ENCODE measurements at regions of chr10 and their contacts with region 1.

Region 1: GRCh38 chr10:44310762-44311562 is 73.9 kb downstream of the CXCL12 start:
- DNase-seq: peak; percentile 78 to 92 (median 84)
- H3K4me3 ChIP-seq: peak overlapping the region; percentile 20 to 68 (median 53)
- H3K27ac ChIP-seq: peak overlapping the region in 13 of 59 donors; percentile 23 to 69 (median 54)
- H3K27me3 ChIP-seq: no peaks in the 10 kb centered on the region
- CTCF ChIP-seq: peak; percentile 58 to 98 (median 93)

Region 2: GRCh38 chr10:43671656-43672531 is 639.1 kb before region 1 on chr10:
- intact Hi-C with region 1: loop called (anchors 5 kb)
- DNase-seq: peak in 3 of 10 donors; percentile 50 to 61 (median 59)
- H3K4me3 ChIP-seq: no peak overlapping the region
- H3K27ac ChIP-seq: no peak overlapping the region
- H3K27me3 ChIP-seq: peaks cover 0 to 39% (median 18%) of the 10 kb centered on the region in 45 donors
- CTCF ChIP-seq: peak; percentile 64 to 95 (median 85)

Region 3: DNA sequence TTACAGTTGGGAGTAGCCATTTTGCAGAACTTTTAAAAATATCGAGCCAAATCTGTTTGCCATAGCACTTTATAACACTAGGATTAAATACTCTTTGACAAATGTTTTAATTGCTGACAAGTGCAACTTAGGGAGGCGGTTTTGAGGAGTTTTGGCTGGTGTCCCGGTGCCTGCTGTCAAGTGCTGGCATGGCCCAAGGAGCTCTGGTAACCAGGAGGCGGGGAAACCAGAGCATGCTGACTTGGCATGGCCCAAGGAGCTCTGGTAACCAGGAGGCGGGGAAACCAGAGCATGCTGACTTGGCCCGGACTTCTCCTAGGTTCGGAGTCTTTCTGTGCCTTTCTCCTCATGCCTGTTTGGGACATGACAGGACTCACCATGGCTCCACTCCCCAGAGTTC is 631.5 kb before region 1 on chr10:
- intact Hi-C with region 1: loop called (anchors 5 kb)
- DNase-seq: peak in 8 of 10 donors; percentile 44 to 86 (median 66)
- H3K4me3 ChIP-seq: no peak overlapping the region
- H3K27ac ChIP-seq: no peak overlapping the region
- H3K27me3 ChIP-seq: peaks cover 0 to 11% (median 0%) of the 10 kb centered on the region in 45 donors
- CTCF ChIP-seq: no peak

Region 4: DNA sequence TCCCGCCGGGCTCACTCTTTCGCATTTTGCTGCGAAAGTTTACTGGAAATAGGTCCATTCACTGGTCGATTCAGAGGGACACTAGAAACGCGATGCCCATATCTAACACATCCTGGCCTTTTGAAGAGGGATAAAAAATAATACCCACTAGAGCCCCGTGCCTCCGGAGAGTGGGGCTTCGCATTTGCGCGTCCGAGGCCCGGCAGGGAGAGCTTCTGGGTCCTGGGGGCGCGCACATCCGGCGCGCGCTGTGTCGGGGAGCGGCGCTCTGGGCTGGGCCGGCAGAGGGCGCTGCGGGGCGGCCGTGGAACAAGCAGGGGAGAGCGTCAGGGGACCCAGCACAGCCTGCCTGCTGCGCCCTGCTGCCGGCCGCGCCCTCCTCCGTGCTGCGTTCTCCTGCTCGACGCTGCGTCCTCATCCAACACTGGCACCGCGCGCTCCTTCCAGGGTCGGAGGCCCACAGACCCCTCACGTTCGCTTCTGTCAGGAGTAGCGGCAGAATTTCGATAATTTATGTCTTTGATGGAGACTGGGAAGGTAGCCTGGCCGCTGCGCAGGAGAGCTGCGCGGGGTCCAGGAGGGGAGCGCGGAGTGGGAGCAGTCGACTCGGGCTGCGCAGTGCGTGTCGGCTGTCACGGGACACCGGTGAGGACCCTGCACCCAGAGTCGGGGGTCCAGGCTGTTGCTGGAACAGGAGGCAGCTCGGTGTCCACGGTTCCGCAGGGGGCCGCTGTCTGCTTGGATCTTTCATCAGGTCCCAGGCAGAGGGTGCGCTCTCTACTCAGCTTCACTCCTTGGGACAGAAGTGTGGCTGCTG is 620.8 kb before region 1 on chr10:
- intact Hi-C with region 1: loop called (anchors 1 to 5 kb)
- DNase-seq: peak; percentile 63 to 88 (median 78)
- H3K4me3 ChIP-seq: peak overlapping the region; percentile 34 to 88 (median 68)
- H3K27ac ChIP-seq: peak overlapping the region in 37 of 59 donors; percentile 5 to 82 (median 67)
- H3K27me3 ChIP-seq: peaks cover 0 to 9% (median 0%) of the 10 kb centered on the region in 45 donors
- CTCF ChIP-seq: peak; percentile 41 to 98 (median 82)

Region 5: DNA sequence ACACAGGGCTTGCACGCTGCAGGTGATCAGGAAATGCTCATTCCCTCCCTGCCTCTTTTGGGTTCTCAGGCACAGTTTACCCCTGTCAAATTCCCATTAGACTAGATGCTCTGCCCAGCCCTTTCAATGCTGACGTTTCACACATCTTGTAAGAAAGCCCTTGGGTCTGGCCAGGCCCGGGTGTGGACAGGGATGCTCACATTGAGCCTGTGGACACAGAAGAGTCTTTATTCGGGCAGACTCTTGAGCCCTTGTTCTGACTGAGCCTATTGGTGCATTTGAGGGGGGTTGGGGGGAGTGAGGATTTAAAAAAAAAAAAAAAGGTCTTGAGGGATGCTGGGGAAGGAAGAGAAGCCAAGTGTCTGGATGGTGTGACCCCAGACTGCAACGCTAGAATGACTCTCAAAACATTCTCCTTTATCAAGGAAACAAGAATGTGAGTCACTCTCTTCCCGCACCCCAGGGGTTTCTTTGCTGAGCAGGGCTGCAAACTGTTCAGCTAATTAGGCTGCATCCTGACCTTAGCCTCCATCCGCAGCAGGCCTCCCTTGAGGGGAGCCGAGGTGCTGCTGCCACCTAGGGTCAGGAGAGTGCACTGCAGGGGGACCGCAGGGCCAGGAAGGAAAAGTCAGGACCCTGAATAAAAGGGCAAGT is 546.5 kb after region 1 on chr10:
- intact Hi-C with region 1: loop called in 1 of 2 experiments (anchors 10 kb)
- DNase-seq: peak in 7 of 10 donors; percentile 28 to 70 (median 48)
- H3K4me3 ChIP-seq: no peak overlapping the region
- H3K27ac ChIP-seq: no peak overlapping the region
- H3K27me3 ChIP-seq: peaks cover 0 to 7% (median 0%) of the 10 kb centered on the region in 45 donors
- CTCF ChIP-seq: peak; percentile 84 to 99 (median 96)

Region 6: GRCh38 chr10:44878706-44879530 is 568.0 kb after region 1 on chr10:
- intact Hi-C with region 1: loop called in 1 of 2 experiments (anchors 10 kb)
- DNase-seq: peak; percentile 85 to 95 (median 91)
- H3K4me3 ChIP-seq: peak overlapping the region; percentile 40 to 73 (median 59)
- H3K27ac ChIP-seq: peak overlapping the region in 58 of 59 donors; percentile 7 to 93 (median 78)
- H3K27me3 ChIP-seq: no peaks in the 10 kb centered on the region
- CTCF ChIP-seq: peak in 40 of 56 donors; percentile 4 to 57 (median 32)